ENCODE measurements at regions of chr10 and their contacts with region 1.

Region 1: GRCh38 chr10:122298598-122299301 is 27.7 kb downstream of the BTBD16 start:
- DNase-seq: peak; percentile 71
- ATAC-seq: peak; percentile 86

Region 2: DNA sequence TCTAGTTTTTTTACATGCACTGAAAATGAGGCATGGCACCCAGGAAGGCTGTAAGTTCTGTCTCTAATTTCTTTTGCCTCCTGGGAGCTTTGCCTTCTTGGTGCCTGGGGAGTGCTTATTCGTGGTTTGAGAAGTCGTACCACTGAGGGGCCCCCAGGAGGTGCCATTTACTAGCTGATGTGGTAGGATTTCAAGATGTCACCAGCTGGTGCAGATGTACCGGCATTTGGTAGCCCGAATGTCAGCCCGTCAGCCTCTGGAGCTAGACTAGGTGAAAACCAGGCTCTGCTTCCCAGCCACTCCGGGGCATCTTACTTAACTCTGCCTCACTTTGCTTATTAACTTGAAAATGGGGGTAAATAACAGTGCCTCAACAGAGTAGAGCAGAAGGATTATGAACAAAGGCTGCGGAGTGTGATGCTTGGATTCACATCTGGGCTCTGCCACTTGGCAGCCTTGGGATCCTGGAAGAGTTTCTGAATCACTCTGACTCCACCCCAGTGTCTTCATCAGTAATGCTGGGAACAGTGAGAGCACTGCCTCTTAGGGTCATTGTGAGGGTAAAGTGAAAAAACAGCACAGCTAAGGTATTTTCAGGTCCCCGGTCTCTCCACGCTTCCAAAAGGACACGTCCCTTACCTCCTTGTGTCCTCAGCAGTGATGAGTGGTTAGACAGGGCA is 59.0 kb before region 1 on chr10:
- intact Hi-C with region 1: no loop called
- DNase-seq: no peak
- ATAC-seq: peak; percentile 22

Region 3: DNA sequence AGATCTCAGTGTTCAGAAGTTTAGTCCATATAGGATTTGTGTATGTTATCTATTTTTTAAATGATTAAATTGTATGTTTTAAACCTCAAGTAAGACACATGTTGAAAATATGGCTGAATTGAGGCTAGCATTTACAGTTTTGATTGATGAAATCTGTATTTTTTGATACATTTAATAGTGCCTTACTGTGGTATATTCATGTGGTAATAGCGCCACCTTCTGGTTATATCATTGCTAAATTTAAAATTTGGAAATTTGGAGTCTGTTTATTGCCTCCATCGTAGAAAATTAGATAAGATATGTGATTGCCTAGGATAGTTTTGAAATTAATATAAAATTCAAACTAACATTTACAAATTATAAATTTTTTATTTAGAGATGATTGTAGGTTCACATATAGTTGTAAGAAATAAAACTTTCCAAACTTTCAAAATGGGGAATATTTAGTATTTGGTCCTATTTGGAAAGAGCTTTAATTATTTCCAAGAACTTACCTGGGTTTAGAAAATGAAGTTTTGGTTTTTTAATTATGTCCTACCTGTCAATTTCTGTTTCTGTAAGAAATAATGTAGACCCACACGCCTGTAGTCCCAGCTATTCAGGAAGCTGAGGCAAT is 136.6 kb after region 1 on chr10:
- intact Hi-C with region 1: loop called (anchors 1 kb)
- DNase-seq: no peak
- ATAC-seq: peak; percentile 33

Region 4: GRCh38 chr10:122703439-122704118 is 404.8 kb after region 1 on chr10:
- intact Hi-C with region 1: loop called (anchors 5 kb)
- DNase-seq: peak; percentile 74
- ATAC-seq: peak; percentile 92